Vagina (tissue), 2 donors: ENCODE measurements at regions of chr3 and their contacts with region 1.

Region 1: GRCh38 chr3:172511783-172512762 is 11.2 kb downstream of the TNFSF10 start:
- DNase-seq: no peak
- H3K4me3 ChIP-seq: no peak overlapping the region
- H3K27ac ChIP-seq: no peak overlapping the region
- H3K4me1 ChIP-seq: peaks cover 42% of the 10 kb centered on the region
- H3K27me3 ChIP-seq: no peaks in the 10 kb centered on the region
- CTCF ChIP-seq: no peak
- POLR2A ChIP-seq: no peak

Region 2: DNA sequence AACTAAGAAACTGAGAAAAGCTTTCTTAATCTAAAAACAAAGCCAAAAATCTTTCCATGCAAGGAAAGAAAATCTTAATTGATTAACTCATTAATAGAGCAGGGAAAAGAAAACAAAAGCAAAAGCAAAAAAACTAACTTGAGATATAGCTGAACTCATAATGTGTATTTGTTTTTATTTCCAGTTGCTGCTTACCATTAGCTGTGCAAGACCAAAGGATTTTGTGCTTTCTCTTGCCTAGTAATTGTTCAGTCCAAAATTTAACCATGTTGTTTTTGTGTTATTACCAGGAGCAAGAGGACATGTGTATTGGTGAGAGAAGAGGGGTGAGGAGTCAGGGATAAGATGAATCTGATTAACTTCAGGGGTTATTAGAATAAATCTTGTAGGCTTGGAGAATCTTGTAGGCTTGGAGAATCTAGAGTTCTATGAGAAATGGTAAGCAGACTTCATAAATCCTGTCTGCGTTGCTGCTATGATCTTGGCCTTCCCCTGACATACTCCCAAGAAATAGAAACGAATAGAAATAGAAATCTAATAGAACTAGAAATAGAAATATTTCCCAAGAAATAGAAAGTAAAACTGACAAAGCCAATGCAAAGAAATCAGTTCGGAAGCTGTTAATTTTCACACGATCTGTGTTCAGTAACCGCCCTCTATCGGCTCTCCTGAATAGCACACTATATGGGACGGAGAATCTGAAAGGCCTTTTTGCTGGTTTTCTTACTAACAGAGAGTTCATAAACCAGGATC is 83.7 kb after region 1 on chr3:
- intact Hi-C with region 1: loop called (anchors 10 kb)
- DNase-seq: no peak
- H3K4me3 ChIP-seq: peak overlapping the region; percentile 23 to 28
- H3K27ac ChIP-seq: peak overlapping the region; percentile 71
- H3K4me1 ChIP-seq: peaks cover 12% of the 10 kb centered on the region
- H3K27me3 ChIP-seq: no peaks in the 10 kb centered on the region
- CTCF ChIP-seq: peak; percentile 50 to 75 (median 66)
- POLR2A ChIP-seq: no peak

Region 3: GRCh38 chr3:172939651-172940293 is 427.7 kb after region 1 on chr3:
- intact Hi-C with region 1: no loop called
- DNase-seq: no peak
- H3K4me3 ChIP-seq: no peak overlapping the region
- H3K27ac ChIP-seq: no peak overlapping the region
- H3K4me1 ChIP-seq: no peaks in the 10 kb centered on the region
- H3K27me3 ChIP-seq: no peaks in the 10 kb centered on the region
- CTCF ChIP-seq: no peak
- POLR2A ChIP-seq: no peak